Pancreas (tissue), 10 donors: ENCODE measurements at regions of chr9 and their contacts with region 1.

Region 1: DNA sequence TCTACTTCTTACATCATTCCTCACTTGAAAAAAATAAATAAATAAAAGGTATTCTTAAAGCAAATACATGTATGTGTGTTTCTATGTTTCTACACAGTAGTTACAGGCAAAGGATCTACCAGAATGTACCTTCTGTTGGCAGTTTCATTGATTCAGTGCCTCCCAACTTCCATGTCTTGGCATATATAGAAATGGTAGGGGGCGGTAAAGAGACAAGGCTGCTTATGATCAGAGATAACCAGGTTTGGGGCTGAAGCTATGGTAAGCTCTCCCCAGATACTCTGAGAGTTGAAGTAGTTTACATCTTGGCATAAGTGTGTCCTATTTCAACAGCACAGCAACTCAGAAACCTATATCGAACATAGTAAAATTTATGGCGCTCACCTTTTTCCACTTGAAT is 1075.4 kb upstream of the C9orf72 start:
- DNase-seq: no peak
- ATAC-seq: no peak
- H3K4me3 ChIP-seq: no peak overlapping the region
- H3K27ac ChIP-seq: no peak overlapping the region
- H3K4me1 ChIP-seq: no peaks in the 10 kb centered on the region
- H3K27me3 ChIP-seq: no peaks in the 10 kb centered on the region
- CTCF ChIP-seq: no peak

Region 2: DNA sequence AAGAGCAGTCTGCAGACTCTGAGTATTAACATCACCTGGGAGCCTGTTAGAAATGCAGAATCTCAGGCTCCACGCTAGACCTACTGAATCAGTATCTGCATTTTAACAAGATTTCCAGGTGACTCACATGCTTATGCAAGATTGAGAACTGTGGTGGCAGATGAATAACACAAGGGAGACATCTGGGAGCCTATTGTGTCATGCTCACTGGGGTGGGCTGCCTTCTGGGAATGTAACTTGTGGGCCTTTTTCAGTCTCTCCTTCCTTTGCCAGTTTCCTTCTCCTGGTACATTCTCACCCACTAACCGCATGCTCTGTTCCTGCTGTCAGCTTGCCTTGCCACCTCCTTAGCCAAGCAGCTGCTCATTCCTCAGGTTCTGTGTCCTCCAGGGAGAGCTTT is 898.9 kb before region 1 on chr9:
- intact Hi-C with region 1: loop called in 1 of 3 experiments (anchors 10 kb)
- DNase-seq: no peak
- ATAC-seq: no peak
- H3K4me3 ChIP-seq: no peak overlapping the region
- H3K27ac ChIP-seq: no peak overlapping the region
- H3K4me1 ChIP-seq: no peaks in the 10 kb centered on the region
- H3K27me3 ChIP-seq: no peaks in the 10 kb centered on the region
- CTCF ChIP-seq: no peak